ENCODE measurements at regions of chr2 and their contacts with region 1.

Region 1: DNA sequence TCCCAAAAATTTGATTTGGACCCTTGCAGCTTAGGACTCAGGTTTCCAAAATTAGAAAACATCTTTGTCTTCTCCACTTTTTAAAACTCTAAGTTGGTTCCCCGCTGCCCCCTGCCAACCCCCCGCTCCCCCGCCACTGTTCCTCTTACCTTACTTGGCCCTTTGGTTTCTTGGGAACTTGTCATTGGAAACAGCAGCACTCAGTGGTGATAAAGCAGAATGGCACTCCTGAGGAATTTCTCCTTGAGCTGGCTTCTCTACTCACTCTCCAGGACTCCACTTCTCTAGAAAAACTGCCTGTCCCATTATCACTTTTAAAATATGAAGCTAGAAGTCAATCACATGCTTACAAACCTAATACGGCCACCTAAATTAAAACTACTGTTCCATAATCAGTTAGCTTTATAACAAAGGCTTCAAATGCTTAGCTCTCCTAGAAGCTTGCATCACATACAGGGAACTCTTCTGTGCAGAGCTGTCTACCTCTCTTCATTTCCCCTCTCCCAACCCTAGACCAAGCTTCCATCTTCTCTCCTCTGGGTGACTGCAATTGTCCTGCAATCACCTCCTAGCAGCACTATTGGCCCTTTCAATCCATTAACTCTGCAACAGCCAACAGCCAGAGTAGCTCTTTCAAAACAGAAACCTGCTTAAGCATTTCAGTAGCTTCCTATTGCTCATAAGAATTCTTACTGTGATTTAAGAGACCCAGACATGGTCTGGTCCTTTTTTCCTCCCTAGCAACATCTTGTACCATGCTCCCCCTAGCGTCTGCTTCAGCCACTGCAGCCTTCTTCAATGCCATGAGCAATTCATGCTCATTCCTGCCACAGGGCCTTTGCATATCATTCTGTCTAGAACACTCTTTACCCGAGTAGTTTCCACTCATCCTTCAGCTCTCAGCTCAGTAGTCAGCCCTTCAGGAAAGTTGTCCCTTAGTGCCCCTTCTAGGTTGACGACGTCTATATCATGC is 15.2 kb upstream of the PLEKHM3 start:
- DNase-seq: peak; percentile 72
- H3K4me3 Mint-ChIP-seq: no peak overlapping the region
- H3K27ac Mint-ChIP-seq: no peak overlapping the region
- H3K4me1 Mint-ChIP-seq: no peaks in the 10 kb centered on the region
- H3K27me3 Mint-ChIP-seq: no peaks in the 10 kb centered on the region
- CTCF ChIP-seq: peak; percentile 57

Region 2: DNA sequence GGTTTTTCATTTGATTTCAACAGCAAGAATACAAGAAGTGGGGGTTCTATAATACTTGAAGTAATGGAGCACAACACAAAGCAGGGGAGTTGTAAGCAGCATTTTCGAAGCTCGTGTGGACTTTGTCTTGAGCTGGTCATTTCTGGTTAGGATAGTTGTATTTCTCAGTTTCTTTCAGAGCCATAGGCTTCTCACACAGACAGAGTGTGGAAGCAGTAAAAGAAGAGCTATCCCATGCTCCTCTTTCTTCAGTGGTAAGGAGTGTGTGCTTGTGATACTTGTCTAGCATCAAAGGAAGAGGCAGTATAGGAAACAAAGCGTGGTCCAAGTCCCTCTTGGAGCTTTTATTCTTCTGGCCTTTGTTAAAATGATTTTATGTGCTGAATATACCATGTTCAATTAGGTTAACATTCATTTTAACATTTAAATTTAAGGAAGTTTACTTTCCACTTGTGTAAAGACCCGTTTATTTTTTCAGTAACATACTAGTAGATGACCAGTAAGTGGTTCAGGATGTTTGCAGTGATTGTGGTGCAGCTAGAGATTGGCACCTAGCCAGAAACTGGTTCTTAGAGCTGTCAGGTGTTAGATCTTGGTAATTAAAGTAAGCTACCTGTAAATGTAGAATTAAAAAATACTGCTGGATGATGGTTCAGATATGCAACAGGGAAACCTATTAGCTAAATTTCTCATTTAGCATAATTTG is 314.5 kb before region 1 on chr2:
- CTCF ChIA-PET with region 1: interaction called, 11 read pairs
- POLR2A ChIA-PET with region 1: interaction called, 3 read pairs
- intact Hi-C with region 1: no loop called
- DNase-seq: peak; percentile 31
- H3K4me3 Mint-ChIP-seq: no peak overlapping the region
- H3K27ac Mint-ChIP-seq: peak overlapping the region; percentile 28
- H3K4me1 Mint-ChIP-seq: peaks cover 25% of the 10 kb centered on the region
- H3K27me3 Mint-ChIP-seq: no peaks in the 10 kb centered on the region
- CTCF ChIP-seq: no peak

Region 3: DNA sequence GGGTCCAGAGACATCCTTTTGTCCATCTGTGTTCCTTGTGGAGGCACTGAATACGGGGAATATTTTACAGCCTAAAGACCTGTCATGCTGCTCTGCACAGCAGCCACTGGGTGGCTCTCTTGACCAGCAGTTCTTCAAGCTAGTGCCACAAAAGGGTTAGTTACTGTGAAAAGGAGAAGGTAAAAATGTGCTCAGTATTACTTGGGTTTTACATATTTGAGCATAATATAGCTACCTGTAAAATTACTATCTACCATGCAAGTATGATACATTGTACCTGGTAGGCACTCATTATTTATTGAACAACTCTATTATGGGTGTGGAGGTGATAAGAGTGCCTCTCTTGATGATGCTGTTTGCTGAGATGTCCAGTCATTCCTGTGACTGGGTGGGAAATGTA is 294.4 kb before region 1 on chr2:
- CTCF ChIA-PET with region 1: interaction called, 193 read pairs
- POLR2A ChIA-PET with region 1: interaction called, 4 read pairs
- intact Hi-C with region 1: loop called (anchors 1 kb)
- DNase-seq: peak; percentile 74
- H3K4me3 Mint-ChIP-seq: no peak overlapping the region
- H3K27ac Mint-ChIP-seq: no peak overlapping the region
- H3K4me1 Mint-ChIP-seq: no peaks in the 10 kb centered on the region
- H3K27me3 Mint-ChIP-seq: no peaks in the 10 kb centered on the region
- CTCF ChIP-seq: peak; percentile 89

Region 4: GRCh38 chr2:207847807-207848544 is 192.5 kb before region 1 on chr2:
- CTCF ChIA-PET with region 1: interaction called, 13 read pairs
- POLR2A ChIA-PET with region 1: no interaction called
- intact Hi-C with region 1: no loop called
- DNase-seq: peak; percentile 93
- H3K4me3 Mint-ChIP-seq: no peak overlapping the region
- H3K27ac Mint-ChIP-seq: peak overlapping the region; percentile 89
- H3K4me1 Mint-ChIP-seq: peaks cover 16% of the 10 kb centered on the region
- H3K27me3 Mint-ChIP-seq: no peaks in the 10 kb centered on the region
- CTCF ChIP-seq: no peak

Region 5: DNA sequence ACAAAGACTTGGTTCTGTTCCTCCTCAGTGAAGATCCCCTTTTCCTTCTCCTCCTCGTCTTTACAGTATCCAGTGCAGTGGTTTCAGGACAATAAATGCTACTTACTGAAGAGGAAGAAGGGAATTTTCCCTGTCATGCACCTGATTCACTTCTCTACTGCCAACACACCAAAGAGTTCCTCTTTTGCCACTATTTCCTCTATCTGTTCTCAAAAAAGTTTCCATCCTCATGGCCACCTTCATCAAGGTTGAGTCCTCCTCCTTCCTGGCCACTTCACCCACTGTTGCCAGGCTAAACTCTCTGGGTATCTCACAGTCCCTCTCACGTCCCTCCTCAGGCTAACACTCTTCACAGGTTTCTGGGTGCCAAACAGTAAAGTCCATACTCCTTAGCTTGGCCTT is 56.8 kb before region 1 on chr2:
- CTCF ChIA-PET with region 1: interaction called, 15 read pairs
- POLR2A ChIA-PET with region 1: no interaction called
- intact Hi-C with region 1: no loop called
- DNase-seq: no peak
- H3K4me3 Mint-ChIP-seq: no peak overlapping the region
- H3K27ac Mint-ChIP-seq: no peak overlapping the region
- H3K4me1 Mint-ChIP-seq: no peaks in the 10 kb centered on the region
- H3K27me3 Mint-ChIP-seq: no peaks in the 10 kb centered on the region
- CTCF ChIP-seq: no peak

Region 6: DNA sequence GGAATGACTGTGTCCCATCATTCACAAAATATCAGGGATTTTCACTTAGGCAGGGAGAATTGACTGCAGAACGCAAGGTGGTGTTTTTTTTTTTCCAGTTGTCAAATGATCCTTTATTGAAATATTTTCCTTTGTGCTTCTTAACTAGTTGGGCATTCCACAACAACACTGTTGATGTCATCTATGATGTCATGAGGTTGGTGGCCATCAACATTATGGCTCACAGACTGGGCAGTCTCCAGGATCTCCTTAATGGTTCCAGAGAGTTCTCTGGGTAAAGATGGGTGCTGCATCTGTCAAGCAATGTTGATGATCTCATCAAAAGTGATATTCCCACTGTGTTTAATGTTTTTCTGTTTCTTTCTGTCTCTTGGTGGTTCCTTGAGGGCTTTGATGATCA is 16.6 kb after region 1 on chr2:
- CTCF ChIA-PET with region 1: interaction called, 18 read pairs
- POLR2A ChIA-PET with region 1: interaction called, 6 read pairs
- intact Hi-C with region 1: no loop called
- DNase-seq: no peak
- H3K4me3 Mint-ChIP-seq: no peak overlapping the region
- H3K27ac Mint-ChIP-seq: no peak overlapping the region
- H3K4me1 Mint-ChIP-seq: no peaks in the 10 kb centered on the region
- H3K27me3 Mint-ChIP-seq: peaks cover 26% of the 10 kb centered on the region
- CTCF ChIP-seq: no peak

Region 7: GRCh38 chr2:208072250-208072892 is 31.9 kb after region 1 on chr2:
- CTCF ChIA-PET with region 1: interaction called, 19 read pairs
- POLR2A ChIA-PET with region 1: no interaction called
- intact Hi-C with region 1: loop called (anchors 2 kb)
- DNase-seq: peak; percentile 75
- H3K4me3 Mint-ChIP-seq: no peak overlapping the region
- H3K27ac Mint-ChIP-seq: no peak overlapping the region
- H3K4me1 Mint-ChIP-seq: no peaks in the 10 kb centered on the region
- H3K27me3 Mint-ChIP-seq: no peaks in the 10 kb centered on the region
- CTCF ChIP-seq: peak; percentile 68